Naive thymus-derived CD4-positive, alpha-beta T cell (primary cell): ENCODE measurements at regions of chr4 and their contacts with region 1.

Region 1: GRCh38 chr4:102430461-102430910 is 70.7 kb upstream of the NFKB1 start:
- DNase-seq: no peak
- ATAC-seq: no peak
- H3K4me3 ChIP-seq: peak overlapping the region; percentile 72
- H3K4me3 Mint-ChIP-seq: peak overlapping the region; percentile 75 to 92 (median 88)
- H3K27ac ChIP-seq: peak overlapping the region; percentile 67
- H3K27ac Mint-ChIP-seq: peak overlapping the region in 8 of 9 donors; percentile 26 to 92 (median 80)
- H3K4me1 ChIP-seq: no peaks in the 10 kb centered on the region
- H3K4me1 Mint-ChIP-seq: peaks cover 0 to 19% (median 5%) of the 10 kb centered on the region in 7 donors
- H3K27me3 ChIP-seq: no peaks in the 10 kb centered on the region
- H3K27me3 Mint-ChIP-seq: peaks cover 0 to 16% (median 0%) of the 10 kb centered on the region in 5 donors

Region 2: GRCh38 chr4:101730291-101731117 is 700.0 kb before region 1 on chr4:
- CTCF ChIA-PET with region 1: no interaction called
- POLR2A ChIA-PET with region 1: no interaction called
- intact Hi-C with region 1: loop called in 1 of 2 experiments (anchors 1 kb)
- DNase-seq: peak in 8 of 9 donors; percentile 8 to 36 (median 27)
- ATAC-seq: peak; percentile 80
- H3K4me3 ChIP-seq: no peak overlapping the region
- H3K4me3 Mint-ChIP-seq: no peak overlapping the region
- H3K27ac ChIP-seq: no peak overlapping the region
- H3K27ac Mint-ChIP-seq: no peak overlapping the region
- H3K4me1 ChIP-seq: no peaks in the 10 kb centered on the region
- H3K4me1 Mint-ChIP-seq: peaks cover 0 to 5% (median 0%) of the 10 kb centered on the region in 7 donors
- H3K27me3 ChIP-seq: no peaks in the 10 kb centered on the region
- H3K27me3 Mint-ChIP-seq: peaks cover 6 to 12% (median 9%) of the 10 kb centered on the region in 5 donors

Region 3: GRCh38 chr4:102007959-102008425 is 422.5 kb before region 1 on chr4:
- CTCF ChIA-PET with region 1: no interaction called
- POLR2A ChIA-PET with region 1: no interaction called
- intact Hi-C with region 1: no loop called
- DNase-seq: no peak
- ATAC-seq: no peak
- H3K4me3 ChIP-seq: no peak overlapping the region
- H3K4me3 Mint-ChIP-seq: no peak overlapping the region
- H3K27ac ChIP-seq: no peak overlapping the region
- H3K27ac Mint-ChIP-seq: no peak overlapping the region
- H3K4me1 ChIP-seq: no peaks in the 10 kb centered on the region
- H3K4me1 Mint-ChIP-seq: peaks cover 0 to 5% (median 2%) of the 10 kb centered on the region in 7 donors
- H3K27me3 ChIP-seq: no peaks in the 10 kb centered on the region
- H3K27me3 Mint-ChIP-seq: peaks cover 0 to 5% (median 0%) of the 10 kb centered on the region in 5 donors

Region 4: GRCh38 chr4:102449751-102450352 is 19.4 kb after region 1 on chr4:
- CTCF ChIA-PET with region 1: interaction called, 6 read pairs
- POLR2A ChIA-PET with region 1: no interaction called
- intact Hi-C with region 1: loop called (anchors 1 kb)
- DNase-seq: peak in 7 of 9 donors; percentile 52 to 78 (median 71)
- ATAC-seq: peak; percentile 85
- H3K4me3 ChIP-seq: no peak overlapping the region
- H3K4me3 Mint-ChIP-seq: no peak overlapping the region
- H3K27ac ChIP-seq: no peak overlapping the region
- H3K27ac Mint-ChIP-seq: peak overlapping the region in 2 of 9 donors; percentile 16 to 56
- H3K4me1 ChIP-seq: no peaks in the 10 kb centered on the region
- H3K4me1 Mint-ChIP-seq: peaks cover 2 to 48% (median 9%) of the 10 kb centered on the region in 7 donors
- H3K27me3 ChIP-seq: no peaks in the 10 kb centered on the region
- H3K27me3 Mint-ChIP-seq: peaks cover 0 to 5% (median 0%) of the 10 kb centered on the region in 5 donors

Region 5: DNA sequence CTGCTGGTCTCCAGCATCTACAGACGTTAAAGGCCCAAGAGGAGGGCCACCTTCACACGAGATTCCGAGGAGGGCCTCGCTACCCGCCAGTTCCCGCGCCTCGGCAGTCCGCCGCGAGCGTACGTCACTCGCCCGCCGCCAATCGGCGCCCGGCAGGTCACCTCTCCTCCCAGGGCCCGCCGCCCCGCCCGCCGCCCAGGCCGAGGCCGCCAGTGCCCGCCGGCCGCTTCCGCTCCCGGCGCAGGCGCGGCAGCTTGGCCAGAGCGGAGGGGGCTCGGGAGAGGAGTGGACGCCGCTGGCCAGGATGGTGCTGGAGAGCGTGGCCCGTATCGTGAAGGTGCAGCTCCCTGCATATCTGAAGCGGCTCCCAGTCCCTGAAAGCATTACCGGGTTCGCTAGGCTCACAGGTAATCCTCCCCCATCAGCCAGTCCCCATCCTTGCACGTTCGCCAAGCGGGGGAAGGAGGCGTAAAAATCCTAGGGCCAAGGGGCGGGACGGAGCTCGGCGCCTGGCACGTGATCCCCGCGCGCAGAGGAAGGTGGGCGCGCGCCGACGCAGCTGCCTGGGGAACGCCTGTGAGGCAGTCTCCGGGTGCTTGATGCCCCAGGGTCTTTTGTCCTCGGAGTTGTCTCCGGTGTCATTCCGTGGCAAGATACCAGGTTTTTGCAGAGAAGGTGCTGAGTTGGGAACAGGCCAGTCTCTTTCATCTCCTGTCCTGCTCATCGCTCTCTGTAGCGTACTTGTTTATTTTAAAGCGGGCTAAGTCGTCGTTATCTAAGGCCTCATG is 438.5 kb after region 1 on chr4 and contains the start of gene CISD2:
- CTCF ChIA-PET with region 1: no interaction called
- POLR2A ChIA-PET with region 1: no interaction called
- intact Hi-C with region 1: loop called (anchors 2 kb)
- DNase-seq: peak; percentile 87 to 95 (median 92)
- ATAC-seq: peak; percentile 90
- H3K4me3 ChIP-seq: peak within 1 kb of the TSS; percentile 95
- H3K4me3 Mint-ChIP-seq: peak within 1 kb of the TSS; percentile 88 to 100 (median 96)
- H3K27ac ChIP-seq: peak within 1 kb of the TSS; percentile 99
- H3K27ac Mint-ChIP-seq: peak within 1 kb of the TSS; percentile 98 to 100 (median 99)
- H3K4me1 ChIP-seq: peaks cover 16 to 28% of the 10 kb centered on the region in 2 donors
- H3K4me1 Mint-ChIP-seq: peaks cover 32 to 80% (median 71%) of the 10 kb centered on the region in 7 donors
- H3K27me3 ChIP-seq: no peaks in the 10 kb centered on the region
- H3K27me3 Mint-ChIP-seq: no peaks in the 10 kb centered on the region
- total RNA-seq, gene CISD2: 11.4 to 50.3 (median 13.4) TPM

Region 6: DNA sequence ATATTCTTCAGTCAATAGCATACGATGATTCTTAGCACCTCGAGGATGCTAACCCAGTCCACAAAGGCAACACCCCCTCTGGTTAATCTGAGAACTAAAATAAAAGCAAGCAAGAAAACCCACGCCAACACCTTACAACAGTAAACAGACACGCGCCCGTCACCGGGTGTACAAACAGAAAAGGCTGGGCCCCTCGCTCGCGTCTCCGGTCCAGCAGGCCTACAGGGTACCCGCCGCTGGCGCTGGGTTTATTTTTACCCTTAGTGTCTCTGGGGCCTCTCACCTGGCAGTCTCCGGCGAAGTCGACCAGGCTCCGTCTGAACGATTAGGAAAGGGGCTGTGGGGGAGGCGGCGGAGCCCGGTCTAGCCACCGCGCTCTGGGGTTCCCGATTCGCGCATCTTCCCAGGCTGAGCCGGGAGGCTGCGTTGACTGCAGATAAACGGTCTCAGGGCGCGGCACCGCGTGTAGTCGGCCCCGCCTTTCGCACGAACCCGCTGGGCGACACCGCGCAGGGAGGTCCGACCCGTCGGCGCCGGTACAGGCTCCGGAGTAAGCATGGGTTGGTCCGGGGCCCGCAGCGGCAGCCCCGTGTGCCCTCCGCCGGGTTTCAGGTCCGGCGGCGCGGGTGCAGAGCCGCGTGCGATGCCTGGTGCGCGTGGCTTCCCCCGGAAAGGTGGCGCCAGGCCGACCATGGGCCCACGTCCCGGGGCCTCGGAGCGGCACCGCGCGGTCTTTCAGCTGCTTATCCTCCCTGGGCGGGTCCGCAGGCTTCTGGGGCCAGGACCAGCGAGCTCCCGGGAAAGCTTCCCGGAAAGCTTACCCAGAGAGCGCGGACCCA is 645.6 kb after region 1 on chr4:
- CTCF ChIA-PET with region 1: no interaction called
- POLR2A ChIA-PET with region 1: no interaction called
- intact Hi-C with region 1: loop called in 1 of 2 experiments (anchors 5 kb)
- DNase-seq: peak; percentile 53 to 75 (median 68)
- ATAC-seq: peak; percentile 83
- H3K4me3 ChIP-seq: peak overlapping the region; percentile 74
- H3K4me3 Mint-ChIP-seq: peak overlapping the region; percentile 77 to 97 (median 95)
- H3K27ac ChIP-seq: peak overlapping the region; percentile 87
- H3K27ac Mint-ChIP-seq: peak overlapping the region; percentile 86 to 99 (median 97)
- H3K4me1 ChIP-seq: peaks cover 10 to 17% of the 10 kb centered on the region in 2 donors
- H3K4me1 Mint-ChIP-seq: peaks cover 23 to 54% (median 47%) of the 10 kb centered on the region in 7 donors
- H3K27me3 ChIP-seq: no peaks in the 10 kb centered on the region
- H3K27me3 Mint-ChIP-seq: no peaks in the 10 kb centered on the region

Region 7: GRCh38 chr4:103198111-103198765 is 767.8 kb after region 1 on chr4 and contains the start of gene CENPE:
- CTCF ChIA-PET with region 1: no interaction called
- POLR2A ChIA-PET with region 1: no interaction called
- intact Hi-C with region 1: loop called in 1 of 2 experiments (anchors 5 kb)
- DNase-seq: peak; percentile 77 to 90 (median 87)
- ATAC-seq: peak; percentile 93
- H3K4me3 ChIP-seq: peak within 1 kb of the TSS; percentile 95
- H3K4me3 Mint-ChIP-seq: peak within 1 kb of the TSS; percentile 81 to 99 (median 96)
- H3K27ac ChIP-seq: peak within 1 kb of the TSS; percentile 91
- H3K27ac Mint-ChIP-seq: peak within 1 kb of the TSS; percentile 87 to 100 (median 99)
- H3K4me1 ChIP-seq: peaks cover 0 to 6% of the 10 kb centered on the region in 2 donors
- H3K4me1 Mint-ChIP-seq: peaks cover 6 to 29% (median 10%) of the 10 kb centered on the region in 7 donors
- H3K27me3 ChIP-seq: no peaks in the 10 kb centered on the region
- H3K27me3 Mint-ChIP-seq: peaks cover 0 to 21% (median 7%) of the 10 kb centered on the region in 5 donors
- total RNA-seq, gene CENPE: 1.1 to 35.8 (median 1.5) TPM